Activated naive CD4-positive, alpha-beta T cell treated with anti-CD3 and anti-CD28 coated beads, Interleukin-2, amount 10 ng/mL, durations not matched to agents 7 days and 5 days (primary cell): ENCODE measurements at regions of chr11 and their contacts with region 1.

Region 1: GRCh38 chr11:122754553-122755322 is 83.6 kb upstream of the CRTAM start:
- DNase-seq: peak; percentile 50
- H3K4me3 Mint-ChIP-seq: no peak overlapping the region
- H3K27ac Mint-ChIP-seq: no peak overlapping the region
- H3K4me1 Mint-ChIP-seq: peaks cover 39% of the 10 kb centered on the region
- H3K27me3 Mint-ChIP-seq: peaks cover 7% of the 10 kb centered on the region

Region 2: DNA sequence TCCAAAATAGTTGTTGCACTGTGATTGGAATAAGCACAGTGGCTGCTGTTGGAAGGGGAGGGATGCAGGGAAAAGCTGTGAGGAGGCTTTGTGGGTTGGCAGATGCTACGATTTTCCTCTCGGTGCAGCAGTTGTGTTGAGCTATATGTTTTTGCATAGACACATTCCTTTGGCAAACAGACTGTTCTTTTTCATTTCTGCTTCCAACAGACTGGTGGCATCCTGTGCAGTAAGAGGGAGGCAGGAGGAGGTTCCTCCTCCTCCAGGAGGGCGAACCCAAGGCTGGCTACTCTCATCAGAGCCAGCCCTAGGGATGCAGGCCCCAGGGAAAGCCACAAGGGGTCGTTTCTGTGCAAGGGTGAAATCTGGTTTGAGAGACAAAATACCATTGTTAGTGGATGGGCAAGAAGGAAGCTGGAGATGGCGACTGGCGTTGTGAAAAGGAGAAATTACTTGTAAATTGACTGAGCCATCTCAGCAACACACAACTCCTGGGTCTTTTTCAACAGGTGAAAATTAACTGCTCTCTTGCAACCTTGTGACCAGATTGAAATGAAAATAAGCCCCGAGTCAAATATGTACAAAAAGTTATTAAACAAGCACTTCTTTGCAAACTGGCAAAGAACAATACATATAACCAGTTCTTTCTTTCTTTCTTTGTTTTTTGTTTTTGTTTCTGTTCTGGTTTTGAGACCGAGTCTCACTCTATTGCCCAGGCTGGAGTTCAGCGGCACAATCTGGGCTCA is 125.8 kb before region 1 on chr11:
- CTCF ChIA-PET with region 1: interaction called, 97 read pairs
- DNase-seq: peak; percentile 77
- H3K4me3 Mint-ChIP-seq: no peak overlapping the region
- H3K27ac Mint-ChIP-seq: no peak overlapping the region
- H3K4me1 Mint-ChIP-seq: peaks cover 13% of the 10 kb centered on the region
- H3K27me3 Mint-ChIP-seq: peaks cover 20% of the 10 kb centered on the region

Region 3: GRCh38 chr11:122668562-122669090 is 86.1 kb before region 1 on chr11:
- CTCF ChIA-PET with region 1: interaction called, 22 read pairs
- DNase-seq: no peak
- H3K4me3 Mint-ChIP-seq: no peak overlapping the region
- H3K27ac Mint-ChIP-seq: peak overlapping the region; percentile 25
- H3K4me1 Mint-ChIP-seq: peaks cover 47% of the 10 kb centered on the region
- H3K27me3 Mint-ChIP-seq: peaks cover 3% of the 10 kb centered on the region

Region 4: GRCh38 chr11:122711831-122712381 is 42.8 kb before region 1 on chr11:
- CTCF ChIA-PET with region 1: interaction called, 19 read pairs
- DNase-seq: no peak
- H3K4me3 Mint-ChIP-seq: no peak overlapping the region
- H3K27ac Mint-ChIP-seq: no peak overlapping the region
- H3K4me1 Mint-ChIP-seq: peaks cover 12% of the 10 kb centered on the region
- H3K27me3 Mint-ChIP-seq: peaks cover 8% of the 10 kb centered on the region

Region 5: GRCh38 chr11:122743949-122744348 is 10.8 kb before region 1 on chr11:
- CTCF ChIA-PET with region 1: interaction called, 43 read pairs
- DNase-seq: peak; percentile 83
- H3K4me3 Mint-ChIP-seq: no peak overlapping the region
- H3K27ac Mint-ChIP-seq: no peak overlapping the region
- H3K4me1 Mint-ChIP-seq: peaks cover 12% of the 10 kb centered on the region
- H3K27me3 Mint-ChIP-seq: peaks cover 9% of the 10 kb centered on the region

Region 6: DNA sequence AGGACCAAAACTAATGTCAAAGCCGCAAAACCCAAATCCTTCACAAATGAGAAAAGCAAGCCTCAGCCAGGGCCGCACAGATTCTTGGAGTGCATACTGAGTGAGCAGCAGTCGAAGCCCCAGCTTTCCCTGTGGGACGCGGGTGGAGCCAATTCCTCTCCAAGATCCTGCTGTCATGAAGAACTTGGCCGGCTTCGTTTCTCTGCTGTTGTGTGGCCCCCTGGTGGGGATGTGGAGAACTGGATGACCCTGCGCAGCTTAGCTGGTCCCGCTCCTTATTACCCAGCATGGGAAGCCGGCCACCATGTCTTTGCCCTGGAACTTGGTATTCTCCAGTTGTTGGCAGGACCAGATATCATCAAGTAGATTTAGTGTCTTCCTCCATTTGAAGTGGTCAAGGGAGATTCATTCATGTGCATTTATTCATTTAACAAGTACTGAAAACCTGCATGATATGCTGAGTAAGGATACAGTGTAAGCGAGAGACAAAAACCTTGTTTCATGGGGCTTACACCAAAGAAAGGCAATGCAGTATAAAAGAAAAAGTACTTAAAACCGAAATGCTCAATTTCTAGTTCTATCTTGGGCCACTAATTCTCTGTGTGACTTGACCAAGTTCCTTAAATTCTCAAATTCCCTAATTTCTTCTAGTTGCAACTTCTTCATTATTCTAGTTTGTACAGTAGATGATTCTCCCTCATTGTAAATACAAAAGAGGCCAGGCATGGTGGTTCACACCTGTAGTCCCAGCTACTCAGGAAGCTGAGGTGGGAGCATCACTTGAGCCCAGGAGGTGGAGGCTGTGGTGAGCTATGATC is 26.8 kb after region 1 on chr11:
- CTCF ChIA-PET with region 1: interaction called, 74 read pairs
- DNase-seq: peak; percentile 80
- H3K4me3 Mint-ChIP-seq: no peak overlapping the region
- H3K27ac Mint-ChIP-seq: no peak overlapping the region
- H3K4me1 Mint-ChIP-seq: peaks cover 3% of the 10 kb centered on the region
- H3K27me3 Mint-ChIP-seq: no peaks in the 10 kb centered on the region

Region 7: DNA sequence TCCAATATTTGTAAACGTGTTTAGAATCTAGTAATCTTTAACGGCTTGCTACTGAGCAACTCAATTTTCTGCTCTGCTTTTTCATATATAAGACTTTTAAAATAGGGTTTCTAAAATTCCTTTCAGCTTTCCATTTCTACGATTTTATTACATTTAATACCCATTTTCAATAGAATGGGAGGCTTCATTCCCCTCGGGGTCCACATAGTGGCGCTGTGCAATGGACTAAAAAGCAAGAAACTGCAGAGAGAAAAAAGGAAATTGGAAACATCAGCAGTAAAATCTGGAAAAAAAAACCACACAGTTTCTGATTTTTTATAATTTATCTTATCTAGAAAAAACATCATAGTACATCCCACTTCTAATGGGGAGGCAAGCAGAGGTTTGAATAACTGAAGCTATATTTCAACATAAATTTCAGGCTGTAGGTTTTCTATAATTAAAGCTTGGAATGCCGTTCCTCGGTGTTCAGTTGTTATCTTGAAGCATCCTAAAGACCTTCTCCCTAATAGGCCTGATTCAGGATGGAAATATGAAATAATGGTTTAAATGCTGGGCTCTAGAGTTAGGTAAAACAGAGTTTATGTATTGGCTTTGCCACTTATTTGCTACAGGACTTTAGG is 109.1 kb after region 1 on chr11:
- CTCF ChIA-PET with region 1: no interaction called
- DNase-seq: peak; percentile 59
- H3K4me3 Mint-ChIP-seq: no peak overlapping the region
- H3K27ac Mint-ChIP-seq: no peak overlapping the region
- H3K4me1 Mint-ChIP-seq: no peaks in the 10 kb centered on the region
- H3K27me3 Mint-ChIP-seq: peaks cover 27% of the 10 kb centered on the region